Naive thymus-derived CD8-positive, alpha-beta T cell (primary cell): ENCODE measurements at regions of chr11 and their contacts with region 1.

Region 1: GRCh38 chr11:7599209-7599608 is 74.1 kb downstream of the CYB5R2 start:
- DNase-seq: no peak
- ATAC-seq: no peak
- H3K4me3 Mint-ChIP-seq: no peak overlapping the region
- H3K27ac Mint-ChIP-seq: no peak overlapping the region
- H3K4me1 Mint-ChIP-seq: no peaks in the 10 kb centered on the region
- H3K27me3 Mint-ChIP-seq: no peaks in the 10 kb centered on the region

Region 2: DNA sequence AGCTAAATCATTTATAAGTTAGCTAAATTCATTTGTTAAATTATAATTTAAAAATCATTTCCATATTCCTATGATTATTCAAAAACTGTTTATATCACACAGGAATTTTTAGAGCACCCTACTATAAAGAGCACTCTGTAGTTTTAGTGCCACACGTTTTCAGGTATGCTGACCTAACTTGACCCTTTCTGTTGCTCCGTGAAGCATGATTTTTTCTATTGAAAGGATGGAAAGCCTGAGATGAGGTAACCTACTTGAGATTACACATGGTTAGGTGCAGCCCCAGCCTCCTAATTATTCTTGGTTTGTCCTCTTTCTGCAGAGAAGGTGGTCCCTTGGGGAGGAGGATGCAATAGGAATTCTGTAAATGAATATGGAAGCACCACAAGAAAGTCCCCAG is 12.8 kb before region 1 on chr11:
- POLR2A ChIA-PET with region 1: interaction called, 11 read pairs
- DNase-seq: no peak
- ATAC-seq: no peak
- H3K4me3 Mint-ChIP-seq: no peak overlapping the region
- H3K27ac Mint-ChIP-seq: no peak overlapping the region
- H3K4me1 Mint-ChIP-seq: peaks cover under 1 to 12% (median 4%) of the 10 kb centered on the region in 4 donors
- H3K27me3 Mint-ChIP-seq: peaks cover 0 to 15% (median 10%) of the 10 kb centered on the region in 5 donors